ENCODE measurements at regions of chr22 and their contacts with region 1.

Region 1: GRCh38 chr22:39960791-39961746 is 872 bp downstream of the TMA7B start:
- DNase-seq: peak; percentile 90
- H3K4me3 Mint-ChIP-seq: peak overlapping the region; percentile 63
- H3K27ac Mint-ChIP-seq: peak overlapping the region; percentile 76
- H3K4me1 Mint-ChIP-seq: peaks cover 48% of the 10 kb centered on the region
- H3K27me3 Mint-ChIP-seq: no peaks in the 10 kb centered on the region

Region 2: DNA sequence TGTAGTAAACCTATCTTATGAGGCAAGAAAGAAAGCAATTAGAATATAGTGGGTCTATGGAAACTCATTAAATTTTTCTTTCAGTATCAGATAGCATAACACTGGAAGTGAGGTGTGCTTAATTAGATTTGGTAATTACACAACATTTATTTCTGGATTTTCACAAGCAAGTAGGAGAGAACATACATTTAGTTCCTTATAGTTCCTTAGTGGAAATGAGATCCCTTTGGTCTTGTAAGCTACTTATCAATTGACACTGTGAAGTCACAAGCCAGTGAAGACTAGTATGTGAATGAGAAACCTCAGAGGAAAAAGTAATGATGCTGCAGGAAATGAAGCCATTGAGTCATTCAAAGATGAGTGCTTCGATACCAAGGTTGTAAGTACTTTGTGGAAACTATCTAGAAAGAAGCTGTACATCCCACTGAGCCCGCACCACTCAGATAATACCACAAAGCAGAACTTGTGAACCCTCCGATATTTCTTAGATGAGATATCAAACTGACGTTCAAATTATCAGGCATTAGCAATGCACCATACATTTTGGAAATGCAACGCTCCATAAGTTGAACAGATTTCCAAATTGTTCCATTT is 121.1 kb before region 1 on chr22:
- intact Hi-C with region 1: loop called (anchors 1 kb)
- DNase-seq: peak; percentile 76
- H3K4me3 Mint-ChIP-seq: no peak overlapping the region
- H3K27ac Mint-ChIP-seq: peak overlapping the region; percentile 4
- H3K4me1 Mint-ChIP-seq: peaks cover 14% of the 10 kb centered on the region
- H3K27me3 Mint-ChIP-seq: peaks cover 13% of the 10 kb centered on the region

Region 3: GRCh38 chr22:39900306-39901227 is 60.5 kb before region 1 on chr22 and contains the start of gene GRAP2:
- intact Hi-C with region 1: loop called (anchors 2 kb)
- DNase-seq: peak; percentile 93
- H3K4me3 Mint-ChIP-seq: peak within 1 kb of the TSS; percentile 84
- H3K27ac Mint-ChIP-seq: peak within 1 kb of the TSS; percentile 82
- H3K4me1 Mint-ChIP-seq: peaks cover 24% of the 10 kb centered on the region
- H3K27me3 Mint-ChIP-seq: no peaks in the 10 kb centered on the region
- total RNA-seq, gene GRAP2: 34.4 and 38.4 TPM in 2 replicates

Region 4: DNA sequence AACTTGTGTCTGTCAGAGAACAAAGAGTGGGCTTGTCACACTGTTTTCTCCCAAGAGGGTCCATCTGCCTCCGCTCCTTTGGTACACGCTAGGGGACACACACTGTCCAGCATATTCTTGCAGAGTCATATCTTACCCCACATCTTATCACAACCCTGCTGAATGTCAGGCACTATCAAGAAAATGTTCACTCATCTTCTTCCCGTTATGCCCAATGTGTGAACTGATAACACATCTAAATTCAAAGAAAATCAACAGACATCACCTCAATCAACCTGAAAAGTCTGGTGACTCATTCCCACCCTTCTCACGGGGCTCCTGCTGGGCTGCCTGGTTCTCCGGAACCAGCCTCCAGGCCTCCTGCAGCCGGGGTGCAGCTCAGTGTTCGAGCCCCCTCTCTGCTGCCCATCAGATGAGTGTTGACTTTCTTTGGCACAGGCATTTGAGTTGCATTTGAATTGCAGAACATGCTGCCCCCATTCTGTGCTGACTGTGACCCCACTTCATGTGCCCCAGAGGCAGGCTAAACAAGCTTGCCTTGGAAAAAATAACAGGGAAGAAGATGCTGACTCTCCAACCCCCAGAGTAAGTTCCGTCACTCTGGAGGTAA is 40.8 kb before region 1 on chr22:
- intact Hi-C with region 1: loop called (anchors 5 kb)
- DNase-seq: peak; percentile 86
- H3K4me3 Mint-ChIP-seq: peak overlapping the region; percentile 84
- H3K27ac Mint-ChIP-seq: peak overlapping the region; percentile 95
- H3K4me1 Mint-ChIP-seq: peaks cover 76% of the 10 kb centered on the region
- H3K27me3 Mint-ChIP-seq: no peaks in the 10 kb centered on the region

Region 5: GRCh38 chr22:39932918-39933649 is 28.0 kb before region 1 on chr22:
- intact Hi-C with region 1: loop called (anchors 2 kb)
- DNase-seq: peak; percentile 86
- H3K4me3 Mint-ChIP-seq: peak overlapping the region; percentile 74
- H3K27ac Mint-ChIP-seq: peak overlapping the region; percentile 91
- H3K4me1 Mint-ChIP-seq: peaks cover 56% of the 10 kb centered on the region
- H3K27me3 Mint-ChIP-seq: no peaks in the 10 kb centered on the region

Region 6: GRCh38 chr22:39994566-39995392 is 33.7 kb after region 1 on chr22 and contains the start of gene FAM83F:
- intact Hi-C with region 1: loop called (anchors 5 kb)
- DNase-seq: peak; percentile 82
- H3K4me3 Mint-ChIP-seq: peak within 1 kb of the TSS; percentile 56
- H3K27ac Mint-ChIP-seq: peak within 1 kb of the TSS; percentile 31
- H3K4me1 Mint-ChIP-seq: peaks cover 5% of the 10 kb centered on the region
- H3K27me3 Mint-ChIP-seq: peaks cover 42% of the 10 kb centered on the region
- total RNA-seq, gene FAM83F: 0.17 and 0.23 TPM in 2 replicates